ENCODE measurements at regions of chr3 and their contacts with region 1.

Region 1: DNA sequence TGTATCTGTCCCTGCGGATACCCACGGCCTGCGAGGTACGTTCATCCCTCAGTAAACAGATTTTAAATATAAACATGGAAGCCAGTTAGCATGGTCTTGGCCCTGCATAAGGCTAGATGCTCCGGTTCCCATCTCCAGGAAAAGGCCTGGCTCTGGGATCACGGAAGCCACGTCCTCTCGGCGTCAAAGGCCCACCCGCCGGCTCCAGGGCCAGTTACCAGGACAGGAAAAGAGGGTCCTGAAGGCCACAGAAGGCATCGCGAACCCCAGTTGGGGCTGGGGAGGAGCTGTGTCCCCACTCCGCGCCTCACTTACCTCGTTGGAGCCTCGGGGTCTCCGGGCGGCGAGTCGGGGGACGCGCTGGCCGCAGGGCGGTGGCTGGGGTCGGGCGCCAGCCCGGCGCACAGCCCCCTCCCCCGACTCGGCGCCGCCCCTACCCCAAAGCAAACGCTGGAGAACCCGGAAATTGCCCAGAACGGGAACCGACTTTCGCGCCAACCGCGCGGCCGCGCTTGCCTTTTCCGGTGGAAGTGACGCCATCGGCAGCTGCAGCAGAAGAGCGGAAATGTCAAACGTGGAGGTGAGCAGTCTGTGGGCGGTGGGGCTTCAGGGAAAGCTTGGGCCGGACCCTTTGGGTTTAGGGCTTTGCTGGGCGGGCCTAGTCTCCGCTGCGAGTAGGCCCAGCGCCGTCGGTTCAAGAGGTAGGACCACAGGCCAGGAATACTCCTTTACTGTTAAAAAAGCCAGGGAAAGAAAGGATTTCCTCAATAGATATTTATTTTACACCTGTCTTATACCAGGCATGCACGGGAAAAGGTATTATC is at the start of gene TOPBP1:
- DNase-seq: peak; percentile 71
- H3K4me3 ChIP-seq: peak within 1 kb of the TSS; percentile 79 to 82
- H3K27ac ChIP-seq: peak within 1 kb of the TSS; percentile 77 to 85
- H3K4me1 ChIP-seq: no peaks in the 10 kb centered on the region
- H3K27me3 ChIP-seq: no peaks in the 10 kb centered on the region
- CTCF ChIP-seq: no peak
- POLR2A ChIP-seq: no peak
- total RNA-seq, gene TOPBP1: 15.6 to 25.3 TPM

Region 2: DNA sequence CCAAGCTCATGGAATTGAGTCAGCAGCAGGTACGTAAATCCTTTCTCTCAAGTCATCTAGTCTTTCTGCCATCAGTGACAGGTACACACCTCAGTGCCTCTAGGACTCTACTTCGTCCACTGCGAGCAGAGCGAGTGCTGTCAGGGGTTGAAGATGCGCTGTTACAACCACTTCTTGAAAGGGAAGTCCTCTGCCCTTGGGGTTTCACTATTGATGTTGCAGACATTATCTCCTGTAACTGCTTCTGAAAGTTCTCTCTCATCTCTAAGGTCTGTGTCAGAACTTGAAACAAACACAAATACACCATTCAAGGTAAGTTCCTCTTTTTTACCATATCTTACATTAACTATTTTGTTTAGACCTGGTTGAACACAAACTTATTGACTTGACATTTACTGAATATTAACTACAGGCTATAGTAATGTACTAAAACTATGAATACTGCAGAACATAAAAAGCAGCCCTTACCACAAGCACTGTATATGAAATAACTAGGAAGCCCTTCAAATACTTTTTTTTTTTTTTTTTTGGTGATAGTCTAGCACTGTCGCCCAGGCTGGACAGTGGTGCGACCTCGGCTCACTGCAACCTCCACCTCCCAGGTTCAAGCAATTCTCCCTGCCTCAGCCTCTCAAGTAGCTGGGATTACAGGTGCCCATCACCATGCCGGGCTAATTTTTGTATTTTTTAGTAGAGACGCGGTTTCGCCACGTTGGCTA is 41.4 kb before region 1 on chr3:
- intact Hi-C with region 1: no loop called
- DNase-seq: no peak
- H3K4me3 ChIP-seq: no peak overlapping the region
- H3K27ac ChIP-seq: no peak overlapping the region
- H3K4me1 ChIP-seq: no peaks in the 10 kb centered on the region
- H3K27me3 ChIP-seq: no peaks in the 10 kb centered on the region
- CTCF ChIP-seq: no peak
- POLR2A ChIP-seq: no peak

Region 3: DNA sequence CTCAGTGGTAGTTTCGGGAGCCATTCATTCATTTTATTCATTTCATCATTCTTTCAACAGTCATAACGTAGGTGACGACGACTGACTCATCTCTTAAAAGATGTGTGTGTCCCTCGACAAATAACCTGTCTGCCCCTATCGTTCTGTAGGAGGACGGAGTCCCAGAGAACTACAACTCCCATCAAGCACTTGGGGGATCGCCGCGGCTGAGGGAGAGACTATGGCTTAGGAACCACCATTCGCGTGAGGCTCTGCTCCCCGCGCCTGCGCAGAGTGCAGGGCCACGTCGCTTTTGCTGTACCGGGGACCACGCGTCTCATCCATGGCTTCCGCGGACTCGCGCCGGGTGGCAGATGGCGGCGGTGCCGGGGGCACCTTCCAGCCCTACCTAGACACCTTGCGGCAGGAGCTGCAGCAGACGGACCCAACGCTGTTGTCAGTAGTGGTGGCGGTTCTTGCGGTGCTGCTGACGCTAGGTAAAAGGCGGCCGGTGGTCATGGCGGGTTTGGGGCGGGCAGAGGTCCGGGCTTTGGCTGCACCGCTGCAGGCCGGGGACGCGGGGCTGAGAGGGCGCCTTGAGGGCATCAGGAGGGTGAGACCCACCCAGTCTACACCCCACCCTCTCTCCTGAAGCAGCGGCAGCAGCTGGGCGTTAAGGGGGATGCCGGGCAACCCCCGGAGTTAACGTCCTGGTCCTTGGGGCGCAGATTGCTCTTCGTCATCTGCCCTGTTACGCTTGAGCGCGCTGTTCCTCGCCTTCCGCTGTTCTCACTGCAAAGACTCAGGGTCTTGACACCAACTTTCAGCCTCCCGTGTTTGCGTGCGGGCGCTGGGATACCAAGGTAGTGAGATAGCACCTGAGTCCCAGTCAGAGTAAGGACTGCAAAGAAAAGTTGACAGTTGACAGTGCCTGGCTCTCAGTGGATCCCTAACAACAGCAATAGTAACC is 144.1 kb after region 1 on chr3 and contains the start of gene SRPRB:
- intact Hi-C with region 1: loop called (anchors 10 kb)
- DNase-seq: peak; percentile 92
- H3K4me3 ChIP-seq: peak within 1 kb of the TSS; percentile 55 to 62
- H3K27ac ChIP-seq: peak within 1 kb of the TSS; percentile 16 to 31
- H3K4me1 ChIP-seq: no peaks in the 10 kb centered on the region
- H3K27me3 ChIP-seq: no peaks in the 10 kb centered on the region
- CTCF ChIP-seq: no peak
- POLR2A ChIP-seq: peak; percentile 59
- total RNA-seq, gene SRPRB: 25.5 to 29.1 TPM

Region 4: GRCh38 chr3:134485718-134486576 is 824.3 kb after region 1 on chr3 and contains the starts of genes ANAPC13 and CEP63:
- intact Hi-C with region 1: loop called (anchors 5 kb)
- DNase-seq: peak; percentile 95
- H3K4me3 ChIP-seq: peak within 1 kb of the TSS; percentile 59 to 89
- H3K27ac ChIP-seq: peak within 1 kb of the TSS; percentile 86 to 96
- H3K4me1 ChIP-seq: peaks cover 9% of the 10 kb centered on the region
- H3K27me3 ChIP-seq: no peaks in the 10 kb centered on the region
- CTCF ChIP-seq: peak in 2 of 4 experiments; percentile 13 to 25
- POLR2A ChIP-seq: no peak
- total RNA-seq, gene ANAPC13: 40.2 to 83.2 TPM
- total RNA-seq, gene CEP63: 35.2 to 60.1 TPM

Measured in prostate gland (tissue), 2 donors.